Gastrocnemius medialis (tissue), 4 donors: ENCODE measurements at regions of chr2 and their contacts with region 1.

Region 1: GRCh38 chr2:25333981-25334380 is 7.7 kb downstream of the DNMT3A start:
- DNase-seq: no peak
- ATAC-seq: no peak
- H3K4me3 ChIP-seq: no peak overlapping the region
- H3K27ac ChIP-seq: peak overlapping the region; percentile 70 to 98 (median 85)
- H3K4me1 ChIP-seq: peaks cover 90 to 97% of the 10 kb centered on the region in 2 donors
- H3K27me3 ChIP-seq: no peaks in the 10 kb centered on the region
- CTCF ChIP-seq: no peak
- POLR2A ChIP-seq: no peak

Region 2: DNA sequence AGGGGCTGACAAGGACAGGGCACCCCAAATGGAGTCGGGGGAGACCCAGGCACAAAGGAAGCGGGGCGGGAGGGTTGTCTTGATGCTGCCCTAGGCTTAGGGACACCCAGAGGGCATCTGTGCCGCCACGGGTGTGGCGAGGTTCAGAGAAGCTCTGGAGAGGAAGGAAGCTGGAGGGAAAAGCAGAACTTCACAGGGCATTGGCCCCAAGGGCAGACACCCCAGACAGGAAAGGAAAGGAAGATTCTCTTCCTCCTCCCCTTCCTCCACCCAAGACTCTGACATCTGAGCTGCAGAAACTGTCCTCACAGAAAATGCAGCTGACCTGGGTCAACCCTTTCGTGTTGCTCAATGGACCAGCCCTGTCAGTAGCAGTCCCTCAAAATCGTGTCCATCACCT is 17.9 kb before region 1 on chr2:
- in situ Hi-C with region 1: no loop called
- intact Hi-C with region 1: loop called (anchors 2 kb)
- DNase-seq: peak; percentile 55 to 74
- ATAC-seq: peak; percentile 80 to 83
- H3K4me3 ChIP-seq: peak overlapping the region in 1 of 4 donors; percentile 34
- H3K27ac ChIP-seq: peak overlapping the region; percentile 73 to 89 (median 80)
- H3K4me1 ChIP-seq: peaks cover 51 to 54% of the 10 kb centered on the region in 2 donors
- H3K27me3 ChIP-seq: no peaks in the 10 kb centered on the region
- CTCF ChIP-seq: no peak
- POLR2A ChIP-seq: no peak